AG04449 (cell line): ENCODE measurements at regions of chr1 and their contacts with region 1.

Region 1: DNA sequence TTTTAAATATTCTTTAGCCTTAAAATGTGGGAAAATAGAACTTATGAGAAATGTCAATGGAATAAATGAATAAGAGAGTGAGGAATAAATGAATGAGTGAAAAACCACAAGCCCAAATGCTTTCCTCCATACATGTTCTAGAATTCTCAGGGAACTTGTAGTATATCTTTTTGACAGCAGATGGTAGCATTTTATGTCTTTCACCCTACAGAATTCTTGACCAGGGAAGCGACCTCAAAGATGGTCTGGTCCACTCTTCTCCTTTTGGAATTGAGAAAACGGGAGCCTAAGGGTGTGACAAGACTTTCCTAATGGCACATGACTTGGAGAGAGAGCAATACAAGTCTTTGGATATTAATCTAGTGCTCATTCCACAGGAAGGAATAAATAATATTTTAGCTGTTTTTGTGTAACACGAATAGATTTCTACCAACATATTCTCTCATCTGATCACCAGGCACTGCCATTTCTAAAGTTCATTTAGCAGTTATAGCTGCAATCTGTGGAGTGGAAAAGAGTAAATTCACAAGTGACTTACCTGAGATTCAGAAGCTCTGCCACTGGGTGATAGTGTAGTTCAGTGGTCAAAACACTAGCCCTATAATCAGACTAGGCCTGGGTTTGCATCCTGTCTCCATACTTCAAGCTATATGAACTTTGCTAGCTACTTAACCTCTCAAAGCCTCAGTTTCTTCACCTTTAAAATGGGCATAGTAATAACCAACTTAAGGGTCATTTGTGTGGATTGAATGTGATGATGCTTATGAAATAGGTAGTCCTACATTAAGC is 15.0 kb upstream of the F5 start:
- DNase-seq: no peak
- H3K4me3 ChIP-seq: no peak overlapping the region
- CTCF ChIP-seq: no peak

Region 2: DNA sequence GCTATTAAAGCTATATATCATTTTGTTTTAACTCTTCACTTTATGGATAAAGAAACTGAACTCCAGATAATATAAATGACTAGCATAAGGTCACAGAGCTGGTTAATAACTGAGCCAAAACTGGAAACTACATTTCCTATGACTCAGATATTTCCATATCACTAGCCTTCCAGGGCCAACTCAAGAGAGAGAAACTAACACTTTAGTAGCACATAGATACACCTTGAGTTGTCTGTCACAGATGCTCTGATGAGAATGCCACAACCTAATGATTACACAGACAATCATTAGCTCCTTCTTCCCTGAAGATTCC is 274.4 kb before region 1 on chr1:
- CTCF ChIA-PET with region 1: no interaction called
- POLR2A ChIA-PET with region 1: no interaction called
- DNase-seq: no peak
- H3K4me3 ChIP-seq: no peak overlapping the region
- CTCF ChIP-seq: no peak

Region 3: DNA sequence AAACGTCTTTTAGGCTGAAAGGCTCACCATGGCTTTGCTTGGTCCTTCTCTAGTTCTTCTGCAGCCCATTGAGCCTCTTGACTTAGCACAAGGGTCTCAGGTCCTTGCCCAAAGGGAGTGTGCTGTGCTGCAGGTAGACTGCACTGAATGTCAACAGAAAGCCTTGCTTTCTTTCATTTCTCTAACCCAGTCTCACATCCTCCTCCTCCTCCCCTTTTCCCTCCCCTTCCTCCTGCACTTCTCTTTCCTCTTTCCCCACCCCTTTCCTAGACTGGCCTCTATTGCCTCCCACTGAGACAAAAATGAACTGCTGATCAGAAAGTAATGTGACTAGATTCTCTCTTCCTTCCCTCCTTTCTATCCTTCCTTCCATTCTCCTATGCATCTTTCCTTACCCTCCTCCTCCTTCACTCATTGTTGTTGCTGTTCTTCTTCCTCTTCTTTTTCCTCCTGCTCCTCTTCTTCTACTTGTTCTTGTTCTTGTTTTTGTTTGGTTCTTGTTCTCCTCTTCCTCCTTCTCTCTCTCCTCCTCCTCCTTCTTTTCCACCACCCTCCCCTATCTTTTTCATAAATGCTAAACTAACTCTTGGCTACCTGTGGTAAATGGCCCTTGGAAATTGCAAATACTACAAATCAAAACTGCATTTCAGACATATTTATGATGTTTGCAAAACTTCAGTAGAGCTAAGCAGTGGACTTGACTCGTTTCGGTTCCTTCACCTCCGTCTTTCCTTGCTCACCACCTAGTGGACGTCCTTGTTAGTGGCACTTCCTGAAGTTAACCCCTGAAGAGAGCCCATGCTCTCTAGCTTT is 110.4 kb after region 1 on chr1 and contains the start of gene SELL:
- CTCF ChIA-PET with region 1: interaction called, 18 read pairs
- POLR2A ChIA-PET with region 1: no interaction called
- DNase-seq: peak; percentile 21
- H3K4me3 ChIP-seq: peak within 1 kb of the TSS; percentile 41
- CTCF ChIP-seq: peak; percentile 70

Region 4: DNA sequence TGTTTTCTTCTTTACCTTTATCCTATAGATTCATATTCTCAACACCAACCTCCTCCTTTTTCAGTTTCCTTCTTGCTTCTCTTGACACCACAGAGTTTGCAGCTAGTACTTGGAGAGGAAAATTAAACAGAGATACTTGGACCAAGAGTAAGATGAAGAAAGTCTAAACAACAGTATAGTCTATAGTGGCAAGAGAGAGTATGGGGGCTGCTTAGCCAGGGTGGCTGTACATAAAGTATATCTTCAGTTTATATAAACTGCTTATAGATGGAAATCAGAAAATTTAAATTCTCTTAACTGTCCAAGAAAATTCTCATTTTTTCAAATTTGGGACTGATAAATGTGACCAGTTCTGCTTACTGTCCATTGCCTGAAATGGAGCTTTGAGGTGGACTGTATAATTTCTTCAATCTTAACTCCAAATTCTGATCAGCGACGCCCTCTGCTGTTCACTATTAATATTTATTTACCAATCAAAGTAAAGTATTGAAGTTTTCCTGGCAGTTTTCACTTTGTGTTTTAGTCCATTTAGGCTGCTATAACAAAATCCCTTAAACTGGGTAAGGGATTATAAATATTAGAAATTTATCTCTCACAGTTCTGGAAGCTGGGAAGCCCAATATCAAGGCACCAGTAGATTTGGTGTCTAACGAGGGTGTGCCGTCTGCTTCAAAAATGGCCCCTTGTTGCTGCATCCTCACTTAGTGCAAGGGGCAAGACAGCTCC is 208.2 kb after region 1 on chr1:
- CTCF ChIA-PET with region 1: interaction called, 34 read pairs
- POLR2A ChIA-PET with region 1: no interaction called
- DNase-seq: no peak
- H3K4me3 ChIP-seq: no peak overlapping the region
- CTCF ChIP-seq: peak; percentile 21

Region 5: GRCh38 chr1:170790651-170791071 is 1189.4 kb after region 1 on chr1:
- CTCF ChIA-PET with region 1: no interaction called
- POLR2A ChIA-PET with region 1: no interaction called
- DNase-seq: peak; percentile 79
- H3K4me3 ChIP-seq: no peak overlapping the region
- CTCF ChIP-seq: no peak